Activated CD4-positive, alpha-beta memory T cell treated with anti-CD3 and anti-CD28 coated beads for 36 hours (primary cell): ENCODE measurements at regions of chr1 and their contacts with region 1.

Region 1: GRCh38 chr1:116934586-116935207 is 25.0 kb downstream of the PTGFRN start:
- DNase-seq: no peak
- H3K4me3 Mint-ChIP-seq: no peak overlapping the region
- H3K27ac Mint-ChIP-seq: no peak overlapping the region
- H3K4me1 Mint-ChIP-seq: peaks cover 26% of the 10 kb centered on the region
- H3K27me3 Mint-ChIP-seq: no peaks in the 10 kb centered on the region

Region 2: DNA sequence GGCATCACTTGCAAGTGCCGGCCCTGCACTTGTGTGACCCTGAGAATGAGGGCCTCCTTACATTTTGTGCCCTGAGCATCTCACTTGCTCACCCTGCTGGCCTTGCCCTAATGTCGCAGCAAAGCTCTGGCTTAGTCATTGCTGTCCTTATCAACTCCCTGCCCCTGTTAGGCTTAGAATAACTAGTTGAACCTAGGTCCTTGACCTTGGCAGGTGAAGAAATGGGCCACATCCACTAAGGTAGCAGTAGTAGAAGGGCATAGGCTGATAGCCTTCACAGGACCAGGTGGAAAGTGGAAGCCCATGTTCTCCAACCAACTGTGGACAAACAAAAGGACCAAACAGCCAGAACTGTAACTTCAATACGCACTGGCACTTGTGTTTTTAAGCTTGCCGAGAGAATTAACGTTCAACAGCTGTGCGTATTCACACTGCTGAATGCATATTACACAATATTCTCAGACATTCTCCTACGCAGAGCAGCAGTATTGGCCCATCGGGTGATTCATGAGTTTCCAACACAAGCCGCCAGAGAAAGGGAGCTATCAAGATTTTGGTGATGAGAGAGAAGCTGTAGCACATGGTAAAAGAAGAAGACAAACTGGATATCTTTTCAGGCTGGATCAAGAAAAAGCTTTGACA is 52.7 kb before region 1 on chr1:
- CTCF ChIA-PET with region 1: interaction called, 5 read pairs
- POLR2A ChIA-PET with region 1: no interaction called
- intact Hi-C with region 1: loop called (anchors 5 kb)
- DNase-seq: peak; percentile 66
- H3K4me3 Mint-ChIP-seq: no peak overlapping the region
- H3K27ac Mint-ChIP-seq: no peak overlapping the region
- H3K4me1 Mint-ChIP-seq: peaks cover 19% of the 10 kb centered on the region
- H3K27me3 Mint-ChIP-seq: no peaks in the 10 kb centered on the region

Region 3: DNA sequence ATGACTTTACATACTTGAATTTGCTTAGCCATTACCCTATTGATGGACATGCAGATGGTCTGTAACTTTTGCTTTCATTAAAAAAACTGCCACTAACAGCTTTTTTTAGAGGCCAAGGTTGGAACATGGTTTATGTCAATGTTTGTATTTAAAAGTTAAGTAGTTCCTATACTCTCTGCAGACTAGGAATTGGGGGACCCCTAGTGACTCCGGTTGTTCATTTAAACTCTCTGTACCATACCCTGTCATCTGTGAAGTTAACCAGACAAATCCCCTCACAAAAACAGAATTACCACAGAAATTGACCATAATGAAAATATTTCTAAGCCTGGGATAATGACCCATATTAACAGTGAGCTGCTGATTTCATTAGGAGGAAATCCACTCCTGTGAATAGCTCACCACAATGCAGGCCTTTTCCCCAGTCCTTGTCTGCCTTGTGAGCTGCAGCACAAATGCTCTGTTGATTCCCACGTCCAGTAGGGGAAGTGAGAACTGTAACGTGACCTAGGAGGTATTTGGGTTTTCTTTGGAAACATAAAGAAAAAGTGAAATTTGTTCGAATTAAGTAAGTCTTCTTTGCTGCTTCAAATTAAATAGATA is 36.7 kb after region 1 on chr1:
- CTCF ChIA-PET with region 1: no interaction called
- POLR2A ChIA-PET with region 1: no interaction called
- intact Hi-C with region 1: no loop called
- DNase-seq: no peak
- H3K4me3 Mint-ChIP-seq: no peak overlapping the region
- H3K27ac Mint-ChIP-seq: no peak overlapping the region
- H3K4me1 Mint-ChIP-seq: no peaks in the 10 kb centered on the region
- H3K27me3 Mint-ChIP-seq: no peaks in the 10 kb centered on the region

Region 4: DNA sequence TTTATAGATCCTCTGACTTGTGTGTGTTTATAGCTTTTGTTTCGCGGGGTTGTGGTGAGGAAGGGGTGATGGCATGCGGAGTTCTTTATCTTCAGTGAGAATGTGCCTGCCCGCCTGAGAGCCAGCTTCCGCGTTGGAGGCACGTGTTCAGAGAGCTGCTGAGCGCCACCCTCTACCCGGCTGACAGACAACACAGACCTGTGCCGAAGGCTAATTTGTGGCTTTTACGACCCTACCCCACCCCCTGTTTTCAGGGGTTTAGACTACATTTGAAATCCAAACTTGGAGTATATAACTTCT is 52.5 kb after region 1 on chr1:
- CTCF ChIA-PET with region 1: interaction called, 3 read pairs
- POLR2A ChIA-PET with region 1: no interaction called
- intact Hi-C with region 1: loop called (anchors 5 kb)
- DNase-seq: peak; percentile 78
- H3K4me3 Mint-ChIP-seq: peak overlapping the region; percentile 76
- H3K27ac Mint-ChIP-seq: peak overlapping the region; percentile 90
- H3K4me1 Mint-ChIP-seq: peaks cover 28% of the 10 kb centered on the region
- H3K27me3 Mint-ChIP-seq: no peaks in the 10 kb centered on the region

Region 5: GRCh38 chr1:117051224-117052064 is 116.7 kb after region 1 on chr1:
- CTCF ChIA-PET with region 1: no interaction called
- POLR2A ChIA-PET with region 1: no interaction called
- intact Hi-C with region 1: loop called (anchors 5 kb)
- DNase-seq: peak; percentile 67
- H3K4me3 Mint-ChIP-seq: peak overlapping the region; percentile 55
- H3K27ac Mint-ChIP-seq: peak overlapping the region; percentile 26
- H3K4me1 Mint-ChIP-seq: peaks cover 30% of the 10 kb centered on the region
- H3K27me3 Mint-ChIP-seq: no peaks in the 10 kb centered on the region